ENCODE measurements at regions of chr2 and their contacts with region 1.

Region 1: GRCh38 chr2:10408649-10409579 is 39.2 kb downstream of the ODC1 start:
- DNase-seq: peak; percentile 88
- CTCF ChIP-seq: peak; percentile 93

Region 2: DNA sequence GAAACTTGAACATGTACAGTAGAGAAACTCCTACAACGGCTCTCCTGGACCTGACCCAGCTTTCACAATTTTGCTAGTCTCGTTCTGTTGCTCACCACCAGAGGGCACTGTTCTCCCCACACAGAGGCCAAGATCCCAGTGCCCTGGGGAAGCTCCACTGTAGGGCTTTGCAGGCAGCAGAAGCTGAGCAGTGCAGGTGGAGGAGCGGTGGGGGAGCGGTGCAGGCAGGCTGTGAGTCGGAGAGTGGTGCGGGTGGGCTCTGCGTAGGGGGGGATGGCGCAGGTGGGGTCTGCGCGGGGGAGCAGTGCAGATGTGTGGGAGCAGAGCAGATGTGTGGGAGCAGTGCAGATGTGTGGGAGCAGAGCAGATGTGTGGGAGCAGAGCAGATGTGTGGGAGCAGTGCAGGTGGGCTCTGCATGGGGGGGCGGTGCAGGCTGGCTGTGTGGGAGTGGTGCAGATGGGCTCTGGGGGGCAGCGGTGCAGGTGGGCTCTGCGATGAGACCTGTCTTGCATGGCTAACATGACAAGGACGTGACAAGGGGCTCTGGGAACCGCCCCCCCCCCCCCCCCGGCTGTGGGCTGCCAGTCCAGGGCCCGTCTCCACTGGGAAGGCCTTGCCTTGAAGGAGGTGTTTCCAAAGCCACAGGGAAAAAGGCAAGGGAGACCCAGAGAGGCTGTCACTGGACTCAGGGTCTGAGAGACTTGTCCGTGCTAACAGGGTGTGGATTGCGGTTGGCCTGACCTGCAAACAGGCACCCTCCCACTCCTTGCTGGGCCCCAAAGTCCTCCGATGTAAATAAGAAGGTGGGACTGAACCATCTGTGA is 336.0 kb before region 1 on chr2:
- CTCF ChIA-PET with region 1: interaction called, 52 read pairs
- POLR2A ChIA-PET with region 1: no interaction called
- DNase-seq: peak; percentile 90
- CTCF ChIP-seq: peak; percentile 83

Region 3: GRCh38 chr2:10122386-10123280 is 286.3 kb before region 1 on chr2 and contains the start of gene RRM2:
- CTCF ChIA-PET with region 1: interaction called, 73 read pairs
- POLR2A ChIA-PET with region 1: no interaction called
- DNase-seq: peak; percentile 96
- CTCF ChIP-seq: no peak

Region 4: DNA sequence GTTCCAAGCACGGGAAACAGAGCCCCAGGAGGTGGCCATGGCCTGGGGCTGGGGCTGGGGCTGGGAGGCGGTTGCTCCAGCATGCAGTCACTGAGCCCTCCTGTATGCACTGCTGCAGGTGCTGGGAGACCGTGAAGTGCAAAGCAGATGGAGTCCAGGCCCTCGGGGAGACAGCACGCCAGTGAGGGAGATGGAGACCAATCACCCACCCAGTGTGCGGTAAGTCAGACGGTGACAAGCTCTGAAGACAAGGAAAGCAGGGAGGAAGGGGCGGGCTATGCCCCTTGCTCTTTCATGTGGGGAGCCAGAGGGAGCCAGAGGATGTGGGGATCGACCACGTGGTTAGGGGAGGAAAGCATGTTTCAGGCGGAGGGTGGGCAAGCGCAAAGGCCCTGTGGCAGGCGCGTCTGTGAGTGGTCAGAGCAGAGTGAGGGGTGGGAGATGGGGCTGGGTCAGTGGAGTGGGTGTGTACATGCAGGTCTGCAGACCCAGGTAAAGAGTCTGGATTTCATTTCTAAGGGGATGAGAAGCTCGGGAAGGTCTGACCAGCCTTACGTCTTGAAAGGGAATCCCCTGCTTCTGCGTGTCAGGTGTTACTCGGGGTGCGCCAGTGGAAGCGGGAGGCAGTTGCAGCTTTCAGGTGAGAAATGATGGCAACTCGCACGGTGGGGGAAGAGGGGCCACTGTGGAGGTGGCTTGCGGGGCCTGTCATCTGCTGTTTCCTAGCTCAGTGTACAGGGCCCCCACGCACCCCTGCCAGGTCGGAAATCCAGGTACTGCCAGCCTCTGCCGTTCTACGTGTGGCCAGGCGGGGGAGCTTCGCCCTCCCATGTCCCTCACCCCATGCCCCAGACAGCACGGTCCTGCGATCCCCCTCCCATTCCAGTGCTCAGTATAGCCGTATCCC is 266.9 kb before region 1 on chr2:
- CTCF ChIA-PET with region 1: interaction called, 24 read pairs
- POLR2A ChIA-PET with region 1: no interaction called
- DNase-seq: no peak
- CTCF ChIP-seq: peak; percentile 67

Region 5: GRCh38 chr2:10196110-10196892 is 212.6 kb before region 1 on chr2:
- CTCF ChIA-PET with region 1: no interaction called
- POLR2A ChIA-PET with region 1: no interaction called
- DNase-seq: no peak
- CTCF ChIP-seq: no peak

Region 6: DNA sequence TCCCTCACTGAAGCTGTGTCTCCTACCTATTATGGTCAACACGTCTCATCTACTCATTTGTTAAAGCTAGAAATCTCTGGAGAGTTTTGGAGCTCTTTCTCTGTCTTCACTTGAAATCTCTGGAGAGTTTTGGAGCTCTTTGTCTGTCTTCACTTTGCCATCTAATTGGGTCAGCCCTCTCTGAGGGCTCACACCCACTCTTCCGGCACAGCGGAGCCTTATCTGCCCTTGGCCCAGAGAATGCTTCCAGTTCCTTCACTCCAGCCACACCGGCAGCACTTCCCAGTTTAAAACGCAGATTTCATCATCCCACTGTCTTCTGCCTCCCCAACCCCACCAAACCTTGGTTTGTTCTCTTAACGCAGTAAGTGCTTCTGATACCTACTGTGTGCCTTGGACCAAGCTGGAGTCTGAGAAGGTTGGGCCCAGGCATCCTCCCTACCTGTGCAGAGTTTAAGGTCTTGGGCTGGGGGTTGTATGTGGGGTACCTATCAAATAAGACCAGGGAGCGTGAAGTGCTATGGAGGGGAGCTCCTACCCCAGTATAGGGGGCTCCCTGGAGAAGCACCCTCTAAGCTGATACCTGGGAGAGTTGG is 101.3 kb before region 1 on chr2:
- CTCF ChIA-PET with region 1: interaction called, 56 read pairs
- POLR2A ChIA-PET with region 1: no interaction called
- DNase-seq: no peak
- CTCF ChIP-seq: no peak

Region 7: DNA sequence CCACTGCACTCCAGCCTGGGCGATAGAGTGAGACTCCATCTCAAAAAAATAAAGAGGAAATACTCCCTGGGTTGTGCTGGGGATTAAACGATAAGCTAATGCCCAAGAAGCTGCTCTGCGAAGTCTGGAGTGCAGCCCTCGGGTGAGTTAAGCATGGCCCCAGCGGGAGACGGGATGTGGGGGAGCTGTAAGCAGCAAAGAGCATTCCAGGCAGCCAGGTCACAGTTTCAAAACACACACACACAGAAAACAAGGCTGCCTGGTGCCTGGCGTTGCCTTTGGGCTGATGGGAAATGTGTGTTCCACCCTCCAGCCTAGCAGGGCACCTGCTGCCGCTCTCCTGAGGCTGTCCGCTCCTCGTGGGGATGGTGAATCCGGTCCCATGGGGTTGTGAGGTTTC is 15.1 kb after region 1 on chr2:
- CTCF ChIA-PET with region 1: interaction called, 93 read pairs
- POLR2A ChIA-PET with region 1: interaction called, 8 read pairs
- DNase-seq: no peak
- CTCF ChIP-seq: no peak

Measured in GM10248 (cell line).